Cardiac septum (tissue), 1 donor: ENCODE measurements at regions of chr20 and their contacts with region 1.

Region 1: GRCh38 chr20:53216856-53217576 is 244.9 kb downstream of the TSHZ2 start:
- DNase-seq: peak; percentile 86

Region 2: GRCh38 chr20:53493311-53493864 is 276.4 kb after region 1 on chr20:
- intact Hi-C with region 1: loop called (anchors 10 kb)
- DNase-seq: no peak

Region 3: GRCh38 chr20:53570521-53571357 is 353.7 kb after region 1 on chr20:
- intact Hi-C with region 1: no loop called
- DNase-seq: no peak